Activated B cell treated with CpG ODN at 0.5 μM for 24 hours (primary cell): ENCODE measurements at regions of chr17 and their contacts with region 1.

Region 1: GRCh38 chr17:7744416-7744815 is 26.9 kb downstream of the DNAH2 start:
- DNase-seq: no peak
- ATAC-seq: no peak
- H3K4me3 Mint-ChIP-seq: no peak overlapping the region
- H3K27ac Mint-ChIP-seq: no peak overlapping the region
- H3K4me1 Mint-ChIP-seq: no peaks in the 10 kb centered on the region
- H3K27me3 Mint-ChIP-seq: peaks cover 13% of the 10 kb centered on the region
- CTCF ChIP-seq: no peak

Region 2: DNA sequence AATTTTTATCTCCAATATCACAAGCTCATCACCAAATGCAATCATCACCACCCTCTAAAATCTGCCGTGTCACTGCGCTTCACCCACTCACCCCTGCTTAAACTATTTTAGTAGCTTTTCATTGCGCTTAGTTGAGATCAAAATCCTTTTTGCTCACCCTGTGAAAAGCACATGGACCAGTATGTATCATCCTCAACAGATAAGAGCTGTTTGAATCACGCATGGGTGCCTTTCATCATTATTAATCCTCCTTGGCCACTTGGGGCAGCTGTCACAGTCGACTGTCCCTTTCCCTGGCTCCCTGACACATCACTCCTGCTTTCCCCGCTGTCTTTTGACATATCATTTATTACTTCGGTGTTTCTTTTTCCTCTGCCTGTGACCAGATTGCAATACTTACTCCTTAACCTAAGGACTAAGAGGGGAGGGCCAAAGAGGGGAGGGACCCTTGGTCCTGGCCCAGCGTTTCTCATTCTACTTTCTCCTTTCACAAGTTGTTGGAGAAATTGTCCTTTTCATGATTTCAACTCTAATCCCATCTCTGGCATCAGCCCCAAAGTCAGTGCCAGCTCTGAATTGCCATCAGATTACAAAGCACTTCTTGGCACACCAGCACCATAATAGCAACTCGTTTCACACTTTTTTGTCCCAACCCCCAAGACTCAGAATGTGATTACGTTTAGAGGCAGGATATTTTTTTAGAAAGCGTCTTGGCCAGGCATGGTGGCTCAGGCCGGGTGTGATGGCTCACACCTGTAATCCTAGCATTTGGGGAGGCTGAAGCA is 81.0 kb after region 1 on chr17:
- CTCF ChIA-PET with region 1: interaction called, 7 read pairs
- POLR2A ChIA-PET with region 1: no interaction called
- intact Hi-C with region 1: loop called (anchors 2 kb)
- DNase-seq: no peak
- ATAC-seq: no peak
- H3K4me3 Mint-ChIP-seq: no peak overlapping the region
- H3K27ac Mint-ChIP-seq: no peak overlapping the region
- H3K4me1 Mint-ChIP-seq: no peaks in the 10 kb centered on the region
- H3K27me3 Mint-ChIP-seq: peaks cover 18% of the 10 kb centered on the region
- CTCF ChIP-seq: no peak

Region 3: GRCh38 chr17:7851438-7852256 is 107.2 kb after region 1 on chr17:
- CTCF ChIA-PET with region 1: interaction called, 5 read pairs
- POLR2A ChIA-PET with region 1: no interaction called
- intact Hi-C with region 1: loop called (anchors 1 kb)
- DNase-seq: peak; percentile 92
- ATAC-seq: peak; percentile 94
- H3K4me3 Mint-ChIP-seq: peak overlapping the region; percentile 62
- H3K27ac Mint-ChIP-seq: peak overlapping the region; percentile 71
- H3K4me1 Mint-ChIP-seq: peaks cover 37% of the 10 kb centered on the region
- H3K27me3 Mint-ChIP-seq: no peaks in the 10 kb centered on the region
- CTCF ChIP-seq: peak; percentile 39

Region 4: GRCh38 chr17:8041249-8041928 is 297.0 kb after region 1 on chr17:
- CTCF ChIA-PET with region 1: interaction called, 12 read pairs
- POLR2A ChIA-PET with region 1: no interaction called
- intact Hi-C with region 1: loop called (anchors 1 kb)
- DNase-seq: no peak
- ATAC-seq: no peak
- H3K4me3 Mint-ChIP-seq: no peak overlapping the region
- H3K27ac Mint-ChIP-seq: no peak overlapping the region
- H3K4me1 Mint-ChIP-seq: peaks cover 3% of the 10 kb centered on the region
- H3K27me3 Mint-ChIP-seq: peaks cover 31% of the 10 kb centered on the region
- CTCF ChIP-seq: no peak